ENCODE measurements at regions of chr10 and their contacts with region 1.

Region 1: DNA sequence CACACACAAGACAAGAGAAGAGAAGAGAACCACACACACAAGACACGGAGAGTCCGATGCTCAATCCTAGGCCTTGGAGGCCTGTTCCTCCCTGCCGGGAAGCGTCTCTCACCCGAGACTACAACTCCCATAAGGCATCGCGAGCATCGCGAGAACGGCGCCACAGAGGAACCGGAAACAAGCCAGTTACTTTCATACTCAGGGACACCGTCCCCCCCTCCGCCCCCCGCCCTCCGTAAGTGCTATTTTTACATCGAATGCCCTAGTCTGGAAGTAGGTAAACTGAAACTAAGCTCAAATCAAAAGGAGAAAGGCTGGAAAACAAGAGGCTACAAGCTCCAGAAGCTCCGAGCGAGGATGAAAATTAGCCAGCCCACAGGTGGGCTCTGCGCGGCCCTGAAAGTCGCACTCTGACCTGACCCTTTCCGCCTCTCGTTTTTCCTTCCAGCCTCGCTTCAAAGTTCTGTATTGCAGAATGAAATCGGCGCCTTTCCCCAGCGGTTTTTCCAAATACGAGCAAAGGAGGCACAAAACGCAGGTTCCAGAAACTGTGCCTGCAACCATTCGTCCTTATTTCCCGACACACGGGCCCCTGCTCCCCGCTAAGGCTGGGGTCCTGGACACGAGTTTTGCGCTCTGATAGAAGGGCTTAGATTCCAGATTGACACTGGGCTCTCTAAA is 11.5 kb upstream of the DNAJC12 start:
- DNase-seq: peak; percentile 98
- H3K4me3 ChIP-seq: peak overlapping the region; percentile 64 to 71 (median 70)
- H3K27ac ChIP-seq: peak overlapping the region; percentile 92 to 96 (median 93)
- H3K4me1 ChIP-seq: peaks cover 0 to 8% (median 7%) of the 10 kb centered on the region in 4 donors
- H3K27me3 ChIP-seq: no peaks in the 10 kb centered on the region
- CTCF ChIP-seq: peak in 1 of 4 experiments; percentile 37
- EP300 ChIP-seq: no peak
- POLR2A ChIP-seq: peak; percentile 44 to 74

Region 2: GRCh38 chr10:67884313-67884841 is 34.9 kb after region 1 on chr10 and contains the start of gene SIRT1:
- intact Hi-C with region 1: loop called (anchors 2 kb)
- DNase-seq: peak; percentile 99
- H3K4me3 ChIP-seq: peak within 1 kb of the TSS; percentile 61 to 86 (median 66)
- H3K27ac ChIP-seq: peak within 1 kb of the TSS; percentile 85 to 98 (median 94)
- H3K4me1 ChIP-seq: peaks cover 0 to 38% (median 10%) of the 10 kb centered on the region in 4 donors
- H3K27me3 ChIP-seq: no peaks in the 10 kb centered on the region
- CTCF ChIP-seq: no peak
- EP300 ChIP-seq: peak in 1 of 4 donors; percentile 40
- POLR2A ChIP-seq: peak; percentile 69 to 88
- total RNA-seq, gene SIRT1: 22.4 to 38.2 (median 33.9) TPM

Region 3: GRCh38 chr10:68074775-68075549 is 225.5 kb after region 1 on chr10 and contains the start of gene HERC4:
- intact Hi-C with region 1: loop called (anchors 5 kb)
- DNase-seq: peak; percentile 98
- H3K4me3 ChIP-seq: peak within 1 kb of the TSS; percentile 74 to 100 (median 81)
- H3K27ac ChIP-seq: peak within 1 kb of the TSS; percentile 94 to 100 (median 98)
- H3K4me1 ChIP-seq: peaks cover 0 to 41% (median 32%) of the 10 kb centered on the region in 4 donors
- H3K27me3 ChIP-seq: no peaks in the 10 kb centered on the region
- CTCF ChIP-seq: no peak
- EP300 ChIP-seq: no peak
- POLR2A ChIP-seq: peak; percentile 70 to 77
- total RNA-seq, gene HERC4: 49.2 to 54.3 (median 52.0) TPM

Region 4: DNA sequence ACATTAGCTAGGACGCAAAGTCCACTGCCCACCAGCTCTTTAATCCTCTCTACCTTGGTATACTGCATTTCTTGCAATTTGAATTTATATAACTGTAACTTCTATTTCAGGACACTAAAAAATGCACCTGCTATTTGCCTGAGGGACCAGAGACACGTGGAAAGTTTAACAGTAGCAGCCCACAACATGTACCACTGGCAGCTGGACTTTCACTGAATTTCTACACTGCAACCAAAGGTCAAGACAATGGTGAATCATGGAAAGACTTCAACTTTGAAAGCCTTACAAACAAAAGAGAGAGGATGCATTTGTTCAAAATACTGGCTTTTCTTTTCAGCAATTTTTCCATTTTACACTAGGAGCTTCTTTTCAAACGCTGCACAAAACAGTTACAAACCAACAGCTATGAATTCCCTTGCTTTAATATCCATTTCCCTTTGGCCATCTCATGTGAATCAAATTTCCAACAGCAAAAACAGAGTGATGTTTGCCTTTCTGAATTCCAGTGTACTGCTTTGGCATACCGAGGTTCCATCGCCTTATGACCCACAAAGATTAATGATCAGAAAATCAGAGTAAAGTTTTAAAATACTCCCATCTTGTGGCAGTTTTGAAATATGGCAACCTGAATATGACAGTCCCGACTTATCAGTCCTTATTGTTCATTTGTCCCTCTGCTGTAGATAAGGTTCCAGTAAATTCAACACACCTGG is 452.5 kb after region 1 on chr10:
- intact Hi-C with region 1: loop called (anchors 10 kb)
- DNase-seq: no peak
- H3K4me3 ChIP-seq: no peak overlapping the region
- H3K27ac ChIP-seq: no peak overlapping the region
- H3K4me1 ChIP-seq: peaks cover 0 to 6% (median 4%) of the 10 kb centered on the region in 4 donors
- H3K27me3 ChIP-seq: no peaks in the 10 kb centered on the region
- CTCF ChIP-seq: peak in 3 of 4 experiments; percentile 18 to 48 (median 33)
- EP300 ChIP-seq: no peak
- POLR2A ChIP-seq: no peak

Measured in sigmoid colon (tissue), 7 donors.